ENCODE measurements at regions of chr2 and their contacts with region 1.

Region 1: GRCh38 chr2:28751252-28751955 is at the start of gene PPP1CB:
- DNase-seq: peak; percentile 97 to 99 (median 99)
- ATAC-seq: peak; percentile 97
- H3K4me3 ChIP-seq: peak within 1 kb of the TSS; percentile 84
- H3K27ac ChIP-seq: peak within 1 kb of the TSS; percentile 96
- H3K4me1 ChIP-seq: peaks cover 7% of the 10 kb centered on the region
- H3K27me3 ChIP-seq: no peaks in the 10 kb centered on the region
- total RNA-seq, gene PPP1CB: 368 to 417 (median 381) TPM

Region 2: DNA sequence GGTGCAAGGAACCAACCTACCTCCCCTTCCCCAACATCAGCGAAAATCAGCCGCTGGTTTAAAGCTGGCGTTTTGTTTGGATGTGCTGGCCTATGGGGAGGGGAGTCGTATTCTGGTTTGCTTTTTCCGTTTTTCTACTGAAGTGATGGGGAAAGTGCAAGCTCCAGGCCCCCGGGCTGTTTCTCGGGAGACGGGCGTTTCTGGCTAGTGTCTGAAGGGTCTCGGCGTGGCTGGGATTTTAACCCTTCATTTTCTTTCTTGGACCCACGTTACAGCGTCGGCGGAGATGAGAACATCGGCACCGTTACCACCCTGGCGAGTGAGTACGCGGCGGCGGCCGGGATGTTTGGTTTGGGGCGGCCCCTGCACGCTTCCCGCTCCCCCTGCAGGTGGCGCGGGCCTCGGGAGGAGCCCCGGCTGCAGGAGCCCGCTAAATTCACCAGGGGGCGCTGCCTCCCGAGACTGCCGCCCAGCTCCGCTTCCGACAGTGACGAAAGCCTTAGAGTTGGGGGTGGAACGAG is 184.8 kb before region 1 on chr2:
- intact Hi-C with region 1: loop called in 1 of 4 experiments (anchors 10 kb)
- DNase-seq: peak; percentile 83 to 94 (median 94)
- ATAC-seq: peak; percentile 93 to 94
- H3K4me3 ChIP-seq: peak overlapping the region; percentile 87
- H3K27ac ChIP-seq: no peak overlapping the region
- H3K4me1 ChIP-seq: no peaks in the 10 kb centered on the region
- H3K27me3 ChIP-seq: no peaks in the 10 kb centered on the region

Region 3: DNA sequence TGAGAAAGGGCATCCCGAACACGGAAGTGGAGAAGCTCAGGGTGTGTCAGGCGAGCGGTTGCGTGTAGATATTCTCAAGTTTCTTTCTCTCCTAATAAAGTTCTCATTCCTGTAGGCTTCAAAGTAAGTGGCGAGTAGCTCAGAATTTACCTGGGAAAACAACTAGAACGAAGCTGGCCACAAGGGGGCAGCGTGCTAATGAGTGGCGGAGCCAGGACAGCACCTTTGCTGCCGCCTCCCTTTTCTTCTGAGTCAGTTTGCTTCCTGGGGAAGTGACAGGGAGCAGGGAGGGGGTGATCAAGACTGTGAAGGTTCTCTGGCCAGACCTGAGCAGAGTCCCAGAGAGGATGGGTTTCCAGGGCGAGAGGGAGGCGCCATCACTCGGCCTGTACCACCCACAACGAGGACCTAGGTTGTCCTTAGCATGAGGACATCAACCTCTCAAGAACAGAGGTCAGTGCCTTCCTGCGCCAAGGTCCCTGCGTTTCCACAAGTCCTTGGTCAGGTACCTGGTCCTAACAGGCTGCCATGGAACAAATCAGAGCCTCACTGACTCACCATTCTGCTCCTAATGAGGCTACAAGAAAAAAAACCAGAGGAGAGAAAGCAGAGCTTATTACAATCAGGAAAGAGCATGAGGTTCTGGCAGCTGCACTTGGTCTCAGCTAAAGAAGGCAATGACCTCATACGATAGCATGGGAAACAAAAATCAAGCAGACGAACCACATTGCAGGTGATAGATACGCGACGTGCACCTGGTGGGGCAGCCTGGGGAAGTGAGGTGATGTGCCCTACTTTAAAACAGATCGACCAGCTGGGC is 156.9 kb before region 1 on chr2:
- intact Hi-C with region 1: loop called (anchors 1 to 10 kb)
- DNase-seq: peak; percentile 87 to 97 (median 92)
- ATAC-seq: peak; percentile 81 to 93
- H3K4me3 ChIP-seq: no peak overlapping the region
- H3K27ac ChIP-seq: peak overlapping the region; percentile 86
- H3K4me1 ChIP-seq: peaks cover 3% of the 10 kb centered on the region
- H3K27me3 ChIP-seq: no peaks in the 10 kb centered on the region

Region 4: GRCh38 chr2:28661589-28662001 is 89.8 kb before region 1 on chr2:
- intact Hi-C with region 1: loop called in 2 of 4 experiments (anchors 2 to 5 kb)
- DNase-seq: peak; percentile 72 to 87 (median 83)
- ATAC-seq: peak; percentile 77 to 89
- H3K4me3 ChIP-seq: no peak overlapping the region
- H3K27ac ChIP-seq: peak overlapping the region; percentile 85
- H3K4me1 ChIP-seq: peaks cover 10% of the 10 kb centered on the region
- H3K27me3 ChIP-seq: no peaks in the 10 kb centered on the region

Region 5: GRCh38 chr2:28821295-28821958 is 70.0 kb after region 1 on chr2:
- intact Hi-C with region 1: no loop called
- DNase-seq: no peak
- ATAC-seq: peak; percentile 19 to 74
- H3K4me3 ChIP-seq: no peak overlapping the region
- H3K27ac ChIP-seq: no peak overlapping the region
- H3K4me1 ChIP-seq: no peaks in the 10 kb centered on the region
- H3K27me3 ChIP-seq: no peaks in the 10 kb centered on the region

Region 6: GRCh38 chr2:28870146-28870891 is 118.9 kb after region 1 on chr2 and contains the start of gene TRMT61B:
- intact Hi-C with region 1: no loop called
- DNase-seq: peak; percentile 98 to 99 (median 99)
- ATAC-seq: peak; percentile 100
- H3K4me3 ChIP-seq: peak within 1 kb of the TSS; percentile 74
- H3K27ac ChIP-seq: peak within 1 kb of the TSS; percentile 46
- H3K4me1 ChIP-seq: no peaks in the 10 kb centered on the region
- H3K27me3 ChIP-seq: no peaks in the 10 kb centered on the region
- total RNA-seq, gene TRMT61B: 13.9 to 24.3 (median 17.2) TPM